Mammary epithelial cell (primary cell): ENCODE measurements at regions of chr6 and their contacts with region 1.

Region 1: GRCh38 chr6:43299338-43300293 is 1.6 kb downstream of the SLC22A7 start:
- DNase-seq: no peak
- H3K4me3 ChIP-seq: no peak overlapping the region
- H3K27ac ChIP-seq: no peak overlapping the region
- H3K4me1 ChIP-seq: no peaks in the 10 kb centered on the region
- H3K27me3 ChIP-seq: no peaks in the 10 kb centered on the region
- CTCF ChIP-seq: no peak

Region 2: DNA sequence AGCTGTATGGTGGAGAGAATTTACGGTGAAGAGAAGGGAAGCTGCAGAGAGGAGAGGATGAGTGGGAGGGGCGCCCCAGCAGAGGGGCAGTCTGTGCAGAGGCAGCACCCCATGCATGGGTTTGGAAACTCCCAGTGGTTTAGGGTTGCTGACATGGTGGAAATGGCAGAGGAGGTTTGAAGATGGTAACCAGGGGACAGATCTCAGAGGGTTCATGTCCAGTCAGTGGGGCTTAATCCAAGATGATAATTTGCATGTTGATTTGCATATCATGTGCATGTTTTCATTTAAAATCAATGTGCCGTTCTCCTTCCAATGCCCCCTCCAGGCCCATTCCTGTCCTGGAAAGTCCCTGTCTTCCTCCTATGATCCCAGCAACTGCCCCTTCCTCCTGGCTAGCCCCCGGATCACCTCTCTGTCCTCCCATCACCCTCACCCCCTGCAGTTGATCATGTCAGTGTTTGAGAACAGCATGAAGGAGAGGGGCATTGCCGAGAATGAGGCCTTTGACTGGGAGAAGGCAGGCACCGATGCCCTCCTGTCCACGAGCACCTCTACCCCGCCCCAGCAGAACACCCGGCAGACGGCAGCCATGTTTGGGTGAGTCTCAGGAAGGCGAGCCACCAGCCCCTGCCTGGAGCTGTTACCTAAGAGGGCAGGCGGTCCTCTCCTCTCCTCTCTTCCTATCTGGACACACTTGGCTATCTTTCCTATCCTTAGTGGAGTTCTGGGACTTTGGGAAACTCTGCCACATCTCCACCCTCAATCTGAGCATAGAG is 42.1 kb before region 1 on chr6:
- CTCF ChIA-PET with region 1: no interaction called
- dilution Hi-C with region 1: loop called (anchors 5 kb)
- in situ Hi-C with region 1: no loop called
- intact Hi-C with region 1: no loop called
- DNase-seq: no peak
- H3K4me3 ChIP-seq: no peak overlapping the region
- H3K27ac ChIP-seq: no peak overlapping the region
- H3K4me1 ChIP-seq: no peaks in the 10 kb centered on the region
- H3K27me3 ChIP-seq: no peaks in the 10 kb centered on the region
- CTCF ChIP-seq: no peak

Region 3: GRCh38 chr6:43286980-43287716 is 12.5 kb before region 1 on chr6:
- CTCF ChIA-PET with region 1: no interaction called
- dilution Hi-C with region 1: no loop called
- in situ Hi-C with region 1: no loop called
- intact Hi-C with region 1: no loop called
- DNase-seq: no peak
- H3K4me3 ChIP-seq: no peak overlapping the region
- H3K27ac ChIP-seq: no peak overlapping the region
- H3K4me1 ChIP-seq: peaks cover 10% of the 10 kb centered on the region
- H3K27me3 ChIP-seq: peaks cover 2% of the 10 kb centered on the region
- CTCF ChIP-seq: no peak